Calu3 (cell line): ENCODE measurements at regions of chr4 and their contacts with region 1.

Region 1: DNA sequence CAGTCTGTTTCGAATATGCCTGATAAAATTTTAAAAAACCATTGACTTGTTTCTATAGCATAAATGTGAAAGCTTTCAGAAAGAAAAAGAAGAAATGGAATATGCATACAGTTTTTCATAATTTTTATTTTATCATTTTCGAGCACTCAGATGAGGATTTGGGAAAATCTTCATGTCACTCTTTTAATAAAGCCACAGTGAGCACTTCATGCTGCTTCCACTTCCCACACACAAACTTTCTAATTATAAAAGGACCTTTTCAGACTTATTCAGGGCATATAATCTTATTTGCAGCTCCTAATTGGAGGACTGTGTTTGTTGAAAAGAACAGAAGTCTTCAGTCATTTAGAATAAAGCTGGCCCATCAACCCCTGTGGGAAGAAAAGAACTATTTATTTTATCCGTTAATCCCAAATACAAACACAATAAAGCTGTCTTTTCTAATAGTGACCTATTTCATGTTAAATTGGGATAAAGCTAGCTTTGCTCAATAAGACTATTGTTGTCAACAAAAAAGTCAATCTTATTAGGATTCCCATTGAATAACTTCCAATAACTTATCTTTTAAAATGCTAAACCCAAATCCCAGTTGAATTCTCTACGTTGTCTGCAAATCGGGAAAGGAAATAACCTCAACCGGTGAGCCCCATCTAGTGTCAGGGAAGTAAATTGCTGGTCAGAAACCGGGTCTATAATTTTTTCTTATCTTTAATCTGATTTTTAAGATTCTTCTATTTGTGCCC is 211.5 kb downstream of the PDGFRA start:
- DNase-seq: peak; percentile 19
- H3K4me3 Mint-ChIP-seq: no peak overlapping the region
- H3K27ac Mint-ChIP-seq: no peak overlapping the region
- H3K4me1 Mint-ChIP-seq: no peaks in the 10 kb centered on the region
- H3K27me3 Mint-ChIP-seq: peaks cover 50% of the 10 kb centered on the region
- CTCF ChIP-seq: no peak

Region 2: GRCh38 chr4:54322818-54323417 is 117.6 kb before region 1 on chr4:
- CTCF ChIA-PET with region 1: no interaction called
- intact Hi-C with region 1: loop called (anchors 1 kb)
- DNase-seq: peak; percentile 67
- H3K4me3 Mint-ChIP-seq: no peak overlapping the region
- H3K27ac Mint-ChIP-seq: no peak overlapping the region
- H3K4me1 Mint-ChIP-seq: no peaks in the 10 kb centered on the region
- H3K27me3 Mint-ChIP-seq: no peaks in the 10 kb centered on the region
- CTCF ChIP-seq: peak; percentile 40

Region 3: DNA sequence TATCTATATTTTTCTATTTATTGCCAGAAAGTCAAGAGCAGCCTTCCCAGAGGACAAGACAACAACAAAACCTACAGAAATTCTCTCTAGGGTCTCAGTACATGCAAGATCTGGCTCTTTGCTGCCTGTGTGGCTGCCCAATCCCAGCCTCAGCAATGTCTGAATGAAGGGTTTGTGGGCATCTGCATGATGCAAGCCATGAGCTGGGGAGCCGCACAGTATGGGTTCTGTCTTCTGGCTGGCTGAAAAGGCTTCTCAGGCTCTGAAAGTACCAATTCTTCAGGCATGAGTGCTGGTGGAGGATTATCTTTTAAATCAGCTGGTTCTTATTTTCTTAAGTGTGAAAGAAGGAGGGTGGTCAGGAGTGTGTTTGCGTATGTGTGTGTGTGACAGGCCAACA is 106.9 kb before region 1 on chr4:
- CTCF ChIA-PET with region 1: no interaction called
- intact Hi-C with region 1: no loop called
- DNase-seq: no peak
- H3K4me3 Mint-ChIP-seq: no peak overlapping the region
- H3K27ac Mint-ChIP-seq: no peak overlapping the region
- H3K4me1 Mint-ChIP-seq: no peaks in the 10 kb centered on the region
- H3K27me3 Mint-ChIP-seq: peaks cover 28% of the 10 kb centered on the region
- CTCF ChIP-seq: no peak

Region 4: DNA sequence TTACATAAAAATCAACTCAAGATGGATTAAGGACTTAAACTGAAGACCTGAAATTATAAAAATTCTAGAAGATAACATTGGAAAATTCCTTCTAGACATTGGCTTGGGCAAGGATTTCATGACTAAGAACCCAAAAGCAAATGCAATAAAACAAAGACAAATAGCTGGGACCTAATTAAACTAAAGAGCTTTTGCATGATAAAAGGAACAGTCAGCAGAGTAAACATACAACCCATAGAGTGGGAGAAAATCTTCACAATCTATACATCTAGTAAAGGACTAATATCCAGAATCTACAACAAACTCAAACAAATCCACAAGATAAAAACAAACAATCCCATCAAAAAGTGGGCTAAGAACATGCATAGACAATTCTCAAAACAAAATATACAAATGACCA is 94.1 kb before region 1 on chr4:
- CTCF ChIA-PET with region 1: no interaction called
- intact Hi-C with region 1: no loop called
- DNase-seq: no peak
- H3K4me3 Mint-ChIP-seq: no peak overlapping the region
- H3K27ac Mint-ChIP-seq: no peak overlapping the region
- H3K4me1 Mint-ChIP-seq: no peaks in the 10 kb centered on the region
- H3K27me3 Mint-ChIP-seq: peaks cover 60% of the 10 kb centered on the region
- CTCF ChIP-seq: no peak

Region 5: DNA sequence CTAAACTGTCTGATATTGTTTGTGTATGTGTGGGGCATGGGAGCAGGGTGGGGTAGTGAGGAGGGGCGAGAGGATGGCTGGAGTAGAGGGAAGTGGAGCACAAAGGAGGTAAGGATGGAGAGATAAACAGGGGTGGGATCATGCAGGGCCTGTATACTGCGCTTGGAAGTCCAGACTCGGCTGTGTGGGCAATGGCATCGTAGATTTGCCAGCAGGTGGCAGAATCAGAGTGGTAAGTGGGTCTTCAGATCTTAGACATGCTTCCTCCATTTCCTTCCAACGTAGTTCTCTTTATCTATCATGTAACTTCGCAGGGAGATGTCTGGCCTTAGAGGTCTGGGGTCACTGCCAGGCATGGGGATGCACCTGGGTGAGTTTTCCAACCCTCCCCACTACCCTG is 56.0 kb before region 1 on chr4:
- CTCF ChIA-PET with region 1: no interaction called
- intact Hi-C with region 1: loop called (anchors 2 kb)
- DNase-seq: peak; percentile 15
- H3K4me3 Mint-ChIP-seq: no peak overlapping the region
- H3K27ac Mint-ChIP-seq: no peak overlapping the region
- H3K4me1 Mint-ChIP-seq: no peaks in the 10 kb centered on the region
- H3K27me3 Mint-ChIP-seq: peaks cover 42% of the 10 kb centered on the region
- CTCF ChIP-seq: no peak

Region 6: GRCh38 chr4:54852054-54852453 is 411.5 kb after region 1 on chr4:
- CTCF ChIA-PET with region 1: no interaction called
- intact Hi-C with region 1: no loop called
- DNase-seq: no peak
- H3K4me3 Mint-ChIP-seq: no peak overlapping the region
- H3K27ac Mint-ChIP-seq: no peak overlapping the region
- H3K4me1 Mint-ChIP-seq: no peaks in the 10 kb centered on the region
- H3K27me3 Mint-ChIP-seq: peaks cover 8% of the 10 kb centered on the region
- CTCF ChIP-seq: no peak